ENCODE measurements at regions of chr2 and their contacts with region 1.

Region 1: DNA sequence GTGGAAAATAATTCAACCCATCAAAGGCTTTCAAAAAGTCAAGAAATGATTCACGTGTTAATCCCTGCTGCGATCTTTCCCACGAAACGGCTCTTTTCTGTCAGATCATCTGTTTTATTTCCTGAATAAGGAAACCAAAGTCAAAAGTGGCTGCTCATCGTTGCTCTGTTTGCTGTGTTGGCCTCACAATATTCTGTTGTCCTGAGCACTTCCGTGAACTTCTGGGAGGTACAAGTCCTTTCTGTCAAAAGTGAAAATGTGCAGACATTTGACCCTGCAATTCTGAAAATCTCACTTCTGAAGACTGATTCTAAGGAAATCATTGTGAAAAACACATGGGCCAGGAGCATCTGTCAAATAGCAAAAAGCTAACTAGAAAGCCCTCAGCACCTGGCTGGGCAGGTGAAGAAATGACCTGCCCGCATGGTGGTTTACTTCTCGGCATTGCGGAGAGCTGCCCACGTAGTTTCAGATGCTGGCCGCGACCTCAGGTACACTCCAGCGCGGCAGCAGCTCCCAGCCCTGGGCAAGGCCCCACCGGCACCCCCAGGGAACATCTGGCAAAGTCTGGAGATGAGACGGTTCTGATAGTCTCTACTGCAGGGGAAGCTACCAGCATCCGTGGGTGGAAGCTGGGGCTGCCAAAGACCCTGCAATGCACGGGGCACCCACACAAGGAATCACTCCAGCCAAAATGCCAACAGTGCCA is 31.9 kb upstream of the GPC1 start:
- DNase-seq: no peak
- H3K4me3 Mint-ChIP-seq: peak overlapping the region; percentile 54
- H3K27ac Mint-ChIP-seq: peak overlapping the region; percentile 84
- H3K4me1 Mint-ChIP-seq: peaks cover 31% of the 10 kb centered on the region
- H3K27me3 Mint-ChIP-seq: peaks cover 2% of the 10 kb centered on the region

Region 2: GRCh38 chr2:240225660-240226475 is 177.7 kb before region 1 on chr2:
- intact Hi-C with region 1: no loop called
- DNase-seq: no peak
- H3K4me3 Mint-ChIP-seq: no peak overlapping the region
- H3K27ac Mint-ChIP-seq: no peak overlapping the region
- H3K4me1 Mint-ChIP-seq: no peaks in the 10 kb centered on the region
- H3K27me3 Mint-ChIP-seq: peaks cover 13% of the 10 kb centered on the region

Region 3: DNA sequence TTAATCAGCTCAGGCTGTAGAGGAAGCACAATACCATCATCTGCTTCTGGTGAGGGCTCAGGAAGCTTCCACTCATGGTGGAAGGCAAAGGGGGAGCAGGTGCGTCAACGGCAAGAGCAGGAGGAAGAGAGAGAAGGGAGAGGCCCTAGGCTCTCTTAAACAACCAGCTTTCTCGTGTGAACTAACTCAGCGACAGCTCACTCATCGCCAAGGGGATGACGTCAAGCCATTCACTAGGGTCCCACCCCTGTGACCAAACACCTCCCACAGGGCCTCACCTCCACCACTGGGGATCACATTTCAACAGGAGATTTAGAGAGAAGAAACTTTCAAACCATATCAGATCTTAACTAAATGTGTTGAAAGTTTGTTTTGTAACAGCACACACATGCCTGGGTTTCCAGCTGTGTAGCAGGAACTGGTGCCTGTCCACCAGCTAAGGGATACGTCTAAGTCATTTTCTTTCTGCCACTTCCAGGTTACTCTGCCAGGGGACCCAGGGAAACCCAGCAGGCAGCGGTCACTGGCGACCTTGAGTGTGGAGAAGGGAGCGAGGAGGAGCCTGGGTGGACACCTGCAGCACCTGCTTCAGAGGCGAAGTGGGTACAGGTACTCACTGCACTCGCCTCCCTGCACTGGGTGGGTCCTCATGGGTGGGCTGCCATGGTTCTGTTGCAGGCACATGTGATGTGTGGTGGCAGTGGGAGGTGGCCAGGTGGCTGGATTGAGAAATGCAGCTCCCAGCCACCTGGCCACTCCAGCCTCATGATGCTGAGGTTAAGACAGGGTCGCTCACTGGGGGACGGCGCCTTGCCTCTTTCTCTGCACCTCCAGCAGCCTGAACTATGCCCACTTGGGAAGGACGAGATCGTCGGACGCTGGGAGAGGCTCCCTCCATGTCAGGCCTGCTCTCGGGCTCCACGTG is 23.5 kb after region 1 on chr2:
- intact Hi-C with region 1: loop called (anchors 1 kb)
- DNase-seq: no peak
- H3K4me3 Mint-ChIP-seq: peak overlapping the region; percentile 36
- H3K27ac Mint-ChIP-seq: peak overlapping the region; percentile 50
- H3K4me1 Mint-ChIP-seq: peaks cover 24% of the 10 kb centered on the region
- H3K27me3 Mint-ChIP-seq: no peaks in the 10 kb centered on the region

Region 4: GRCh38 chr2:240819858-240820606 is 416.5 kb after region 1 on chr2 and contains the start of gene KIF1A:
- intact Hi-C with region 1: no loop called
- DNase-seq: no peak
- H3K4me3 Mint-ChIP-seq: peak within 1 kb of the TSS; percentile 33
- H3K27ac Mint-ChIP-seq: no peak within 1 kb of the TSS
- H3K4me1 Mint-ChIP-seq: peaks cover 4% of the 10 kb centered on the region
- H3K27me3 Mint-ChIP-seq: peaks cover 45% of the 10 kb centered on the region
- total RNA-seq, gene KIF1A: 0.97 and 2.2 TPM in 2 replicates